AG04450 (cell line): ENCODE measurements at regions of chr21 and their contacts with region 1.

Region 1: DNA sequence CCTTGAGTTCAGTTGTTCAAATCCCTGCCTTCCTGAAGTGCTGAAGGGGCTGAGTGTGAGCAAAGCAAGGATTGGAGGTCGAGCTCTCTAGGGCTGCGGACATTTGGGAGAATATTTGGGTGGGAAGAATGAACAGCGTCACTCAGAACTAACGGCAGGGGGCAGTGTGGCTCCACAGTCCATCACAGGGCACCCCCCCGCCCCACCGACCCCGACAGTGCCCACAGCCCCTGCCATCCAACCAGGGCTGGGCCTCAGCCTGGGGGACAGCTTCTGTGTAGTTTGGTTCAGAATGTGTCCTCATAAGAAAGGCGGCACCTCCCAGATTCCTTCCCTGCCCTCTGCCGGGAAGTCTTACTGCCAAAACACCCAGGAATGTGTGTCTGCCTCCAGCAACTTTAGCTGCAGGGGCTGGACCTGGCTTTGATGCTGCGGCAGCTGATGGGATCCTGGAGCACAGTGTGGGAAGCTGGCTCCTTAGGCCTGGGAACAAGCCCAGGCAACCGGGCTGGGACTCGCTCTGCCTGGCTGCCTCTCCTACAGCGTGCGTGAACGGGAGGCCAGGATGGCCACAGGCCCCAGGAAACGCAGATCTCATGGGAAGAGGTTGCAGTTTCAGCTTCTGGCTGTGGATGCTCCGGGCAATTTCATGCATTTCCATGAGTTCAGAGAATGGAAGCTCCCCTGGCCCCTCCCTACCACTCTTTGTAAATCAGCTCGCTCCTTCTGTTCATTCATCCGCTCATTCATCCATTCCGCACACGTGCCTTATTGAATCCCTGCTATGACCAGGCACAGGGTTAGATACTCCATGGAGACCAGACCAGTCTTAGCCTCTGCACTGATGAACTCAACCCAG is 104.9 kb upstream of the TMPRSS2 start:
- DNase-seq: peak; percentile 74
- H3K4me3 ChIP-seq: no peak overlapping the region
- H3K27ac ChIP-seq: peak overlapping the region; percentile 68
- H3K27me3 ChIP-seq: peaks cover 12% of the 10 kb centered on the region
- CTCF ChIP-seq: peak; percentile 77

Region 2: DNA sequence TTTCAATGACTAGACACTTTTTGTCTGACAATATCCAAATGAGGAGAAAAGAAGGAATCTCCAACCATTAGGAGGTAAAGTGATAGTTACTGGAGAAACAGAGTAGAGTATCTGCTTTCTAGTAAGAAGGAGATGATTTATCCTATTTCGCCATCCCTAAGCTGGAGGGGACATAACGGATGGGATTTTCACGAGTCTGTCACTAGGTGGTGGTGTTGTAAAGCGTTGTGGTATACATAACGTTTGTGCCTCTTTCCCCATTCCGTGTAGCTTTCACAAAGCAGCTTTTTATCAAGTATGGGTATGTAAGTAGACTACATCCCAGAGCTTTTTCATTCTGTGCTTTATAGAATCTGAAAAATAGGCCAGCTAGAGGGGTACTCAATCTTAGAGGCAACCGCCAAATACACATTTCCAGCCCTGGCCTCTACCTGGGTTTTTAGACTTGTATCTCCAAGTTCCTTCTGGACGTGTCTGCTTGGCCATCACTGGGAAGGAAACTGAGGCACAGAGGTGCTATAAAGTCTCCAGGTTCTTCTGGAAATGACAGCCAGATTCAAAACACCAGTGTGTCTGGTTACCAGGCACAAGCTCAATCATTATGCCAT is 329.6 kb before region 1 on chr21:
- CTCF ChIA-PET with region 1: interaction called, 25 read pairs
- POLR2A ChIA-PET with region 1: no interaction called
- DNase-seq: peak; percentile 65
- H3K4me3 ChIP-seq: no peak overlapping the region
- H3K27ac ChIP-seq: no peak overlapping the region
- H3K27me3 ChIP-seq: no peaks in the 10 kb centered on the region
- CTCF ChIP-seq: peak; percentile 88

Region 3: DNA sequence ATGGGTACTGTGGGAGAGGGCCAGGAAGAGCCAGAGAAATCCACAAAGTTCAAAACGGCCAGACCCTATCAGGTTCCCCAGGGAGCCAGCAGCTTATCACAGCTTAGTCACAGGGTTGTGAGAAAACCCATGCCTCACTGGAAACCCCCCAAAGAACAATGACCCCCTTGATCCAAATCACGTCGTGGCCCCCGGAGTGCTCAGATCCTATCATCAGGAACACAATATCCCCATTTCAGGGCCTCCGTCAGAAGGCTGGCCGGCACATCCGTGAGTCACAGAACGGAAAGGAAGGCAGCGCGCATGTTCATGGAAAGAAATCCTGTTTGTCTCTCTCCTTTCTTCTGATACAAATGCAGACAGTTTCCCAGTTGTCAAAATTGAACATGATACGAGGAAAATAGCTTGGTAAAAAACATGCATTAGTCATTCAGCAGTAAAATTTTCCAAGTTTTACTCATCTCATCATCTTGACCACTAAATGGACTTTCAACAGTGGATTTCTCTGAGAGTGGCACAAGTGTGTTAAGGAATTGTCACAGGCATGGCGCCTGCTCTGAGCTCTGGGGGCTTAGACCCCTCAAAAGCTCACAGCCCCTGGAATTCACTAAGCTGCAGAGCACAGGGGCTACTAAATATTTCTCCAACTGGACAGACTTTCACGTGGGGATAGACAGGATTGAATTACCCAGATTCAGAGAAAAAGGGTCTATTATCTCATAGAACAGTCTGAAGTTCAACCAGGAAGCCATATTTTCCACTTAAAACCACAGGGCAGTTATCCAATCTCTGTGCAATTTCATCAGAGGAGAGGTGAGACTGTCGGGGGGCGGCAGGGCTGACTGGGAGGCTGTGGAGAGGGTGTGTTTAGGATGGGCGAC is 29.2 kb after region 1 on chr21:
- CTCF ChIA-PET with region 1: interaction called, 6 read pairs
- POLR2A ChIA-PET with region 1: interaction called, 14 read pairs
- DNase-seq: peak; percentile 49
- H3K4me3 ChIP-seq: peak overlapping the region; percentile 20; the same call in 1 of the 2 replicates
- H3K27ac ChIP-seq: peak overlapping the region; percentile 93
- H3K27me3 ChIP-seq: no peaks in the 10 kb centered on the region
- CTCF ChIP-seq: no peak

Region 4: GRCh38 chr21:41777951-41778874 is 165.3 kb after region 1 on chr21:
- CTCF ChIA-PET with region 1: interaction called, 76 read pairs
- POLR2A ChIA-PET with region 1: no interaction called
- DNase-seq: peak; percentile 30
- H3K4me3 ChIP-seq: no peak overlapping the region
- H3K27ac ChIP-seq: no peak overlapping the region
- H3K27me3 ChIP-seq: peaks cover 51% of the 10 kb centered on the region
- CTCF ChIP-seq: peak; percentile 77

Region 5: DNA sequence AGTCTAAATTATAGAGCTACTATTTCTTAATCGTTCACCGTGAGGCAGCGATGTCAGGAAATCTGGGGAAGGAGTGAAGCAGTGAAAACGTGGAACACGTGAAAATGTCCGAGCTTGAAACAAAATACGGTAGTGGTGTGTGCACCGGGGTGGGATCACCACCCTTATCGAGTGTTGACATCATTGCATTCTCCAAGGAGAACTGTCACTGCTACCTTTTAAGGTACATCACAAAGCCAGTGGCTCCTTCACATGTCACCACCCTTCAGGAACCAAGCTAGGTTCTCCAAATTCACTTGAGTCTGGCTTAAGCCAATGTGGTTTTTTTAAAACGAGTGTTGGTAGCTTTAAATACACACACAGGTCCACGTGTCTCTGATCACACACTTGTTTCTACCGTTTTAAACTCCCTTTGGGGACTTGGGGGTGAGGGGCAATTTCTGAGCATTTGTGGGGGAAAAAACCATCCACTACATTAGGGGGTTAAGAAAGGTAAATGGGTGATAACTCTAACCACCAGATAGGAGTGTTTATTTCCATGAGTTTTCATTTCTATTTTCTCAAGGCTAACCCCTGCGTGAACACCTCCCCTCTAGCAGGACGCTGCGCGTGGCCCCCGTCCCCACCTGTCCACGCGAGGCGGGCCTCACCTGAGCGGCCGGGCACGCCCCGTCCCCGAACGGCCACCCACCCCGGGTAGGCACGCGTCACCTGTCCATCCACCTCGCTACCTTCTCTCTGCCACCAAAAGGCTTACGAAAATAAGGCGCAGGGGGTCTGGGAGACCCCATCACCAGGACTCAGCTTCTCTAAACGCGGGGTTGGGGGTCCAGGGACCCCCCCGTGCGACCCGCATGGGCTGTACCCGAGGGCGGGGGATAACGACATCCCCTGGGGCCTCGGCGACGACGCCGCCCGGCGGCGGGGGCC is 265.3 kb after region 1 on chr21:
- CTCF ChIA-PET with region 1: interaction called, 13 read pairs
- POLR2A ChIA-PET with region 1: no interaction called
- DNase-seq: no peak
- H3K4me3 ChIP-seq: peak overlapping the region; percentile 83
- H3K27ac ChIP-seq: peak overlapping the region; percentile 57
- H3K27me3 ChIP-seq: no peaks in the 10 kb centered on the region
- CTCF ChIP-seq: no peak